ENCODE measurements at regions of chr15 and their contacts with region 1.

Region 1: DNA sequence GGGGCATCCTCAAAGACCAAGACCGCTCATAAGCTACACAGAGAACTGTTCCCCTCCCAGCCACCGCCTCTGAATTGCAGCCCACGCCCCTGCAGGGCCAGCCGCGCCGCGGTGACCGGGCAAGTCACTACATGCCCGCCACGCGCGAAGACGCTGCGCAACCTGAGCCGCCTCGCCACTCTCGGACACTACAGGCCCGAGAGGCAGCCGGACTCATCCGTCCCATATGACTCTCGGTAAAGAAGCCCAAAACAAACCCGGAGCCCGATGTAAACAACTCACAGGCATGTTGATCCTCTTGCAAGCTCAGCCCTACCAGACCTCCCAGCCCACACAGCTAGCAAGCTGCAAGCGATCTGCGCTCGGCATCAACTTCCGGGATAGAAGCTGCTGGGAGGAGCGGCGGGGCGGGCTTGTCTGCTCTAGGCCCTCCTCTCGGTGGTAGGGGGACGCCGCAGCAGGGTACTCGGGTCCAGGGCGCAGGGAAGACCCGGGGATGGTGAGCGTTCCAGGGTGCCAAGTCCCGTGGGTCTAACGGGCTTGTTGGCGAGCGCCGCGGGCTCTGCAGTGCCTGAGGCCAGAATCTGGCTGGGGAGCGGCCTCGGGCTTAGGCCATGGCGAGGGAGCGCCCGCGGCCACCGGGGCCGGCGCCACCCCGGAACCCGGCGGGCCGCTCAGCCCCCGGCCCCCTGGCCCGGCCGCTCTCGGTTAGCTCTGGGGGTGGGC is at the start of gene RPS27L:
- DNase-seq: peak; percentile 85 to 94 (median 87)
- H3K4me3 ChIP-seq: peak within 1 kb of the TSS; percentile 53 to 88
- H3K4me3 Mint-ChIP-seq: peak within 1 kb of the TSS; percentile 97 to 100 (median 100)
- H3K27ac ChIP-seq: peak within 1 kb of the TSS; percentile 74
- H3K27ac Mint-ChIP-seq: peak within 1 kb of the TSS; percentile 89 to 99 (median 98)
- H3K4me1 ChIP-seq: peaks cover 29% of the 10 kb centered on the region
- H3K4me1 Mint-ChIP-seq: peaks cover 14 to 32% (median 24%) of the 10 kb centered on the region in 4 donors
- H3K27me3 ChIP-seq: no peaks in the 10 kb centered on the region
- H3K27me3 Mint-ChIP-seq: no peaks in the 10 kb centered on the region
- total RNA-seq, gene RPS27L: 150 to 161 TPM

Region 2: GRCh38 chr15:62880278-62880677 is 277.0 kb before region 1 on chr15:
- CTCF ChIA-PET with region 1: no interaction called
- POLR2A ChIA-PET with region 1: no interaction called
- intact Hi-C with region 1: no loop called
- DNase-seq: no peak
- H3K4me3 ChIP-seq: no peak overlapping the region
- H3K4me3 Mint-ChIP-seq: no peak overlapping the region
- H3K27ac ChIP-seq: no peak overlapping the region
- H3K27ac Mint-ChIP-seq: no peak overlapping the region
- H3K4me1 ChIP-seq: no peaks in the 10 kb centered on the region
- H3K4me1 Mint-ChIP-seq: peaks cover 0 to 8% (median 2%) of the 10 kb centered on the region in 4 donors
- H3K27me3 ChIP-seq: no peaks in the 10 kb centered on the region
- H3K27me3 Mint-ChIP-seq: peaks cover 10 to 22% of the 10 kb centered on the region in 2 donors

Region 3: GRCh38 chr15:63093486-63094205 is 63.6 kb before region 1 on chr15:
- CTCF ChIA-PET with region 1: no interaction called
- POLR2A ChIA-PET with region 1: no interaction called
- intact Hi-C with region 1: no loop called
- DNase-seq: peak; percentile 57 to 62 (median 57)
- H3K4me3 ChIP-seq: no peak overlapping the region
- H3K4me3 Mint-ChIP-seq: no peak overlapping the region
- H3K27ac ChIP-seq: no peak overlapping the region
- H3K27ac Mint-ChIP-seq: no peak overlapping the region
- H3K4me1 ChIP-seq: no peaks in the 10 kb centered on the region
- H3K4me1 Mint-ChIP-seq: peaks cover 0 to 2% (median 0%) of the 10 kb centered on the region in 4 donors
- H3K27me3 ChIP-seq: no peaks in the 10 kb centered on the region
- H3K27me3 Mint-ChIP-seq: peaks cover 0 to 2% of the 10 kb centered on the region in 2 donors

Region 4: GRCh38 chr15:63121382-63122001 is 35.8 kb before region 1 on chr15 and contains the start of gene LACTB:
- CTCF ChIA-PET with region 1: no interaction called
- POLR2A ChIA-PET with region 1: interaction called, 8 read pairs
- intact Hi-C with region 1: loop called (anchors 1 kb)
- DNase-seq: peak; percentile 73 to 79 (median 77)
- H3K4me3 ChIP-seq: peak within 1 kb of the TSS; percentile 69 to 76
- H3K4me3 Mint-ChIP-seq: peak within 1 kb of the TSS; percentile 87 to 98 (median 93)
- H3K27ac ChIP-seq: peak within 1 kb of the TSS; percentile 67
- H3K27ac Mint-ChIP-seq: peak within 1 kb of the TSS; percentile 84 to 96 (median 94)
- H3K4me1 ChIP-seq: peaks cover 10% of the 10 kb centered on the region
- H3K4me1 Mint-ChIP-seq: peaks cover 7 to 28% (median 14%) of the 10 kb centered on the region in 4 donors
- H3K27me3 ChIP-seq: no peaks in the 10 kb centered on the region
- H3K27me3 Mint-ChIP-seq: no peaks in the 10 kb centered on the region
- total RNA-seq, gene LACTB: 11.7 to 12.1 TPM

Region 5: GRCh38 chr15:63146669-63147068 is 10.6 kb before region 1 on chr15:
- CTCF ChIA-PET with region 1: no interaction called
- POLR2A ChIA-PET with region 1: interaction called, 24 read pairs
- intact Hi-C with region 1: no loop called
- DNase-seq: no peak
- H3K4me3 ChIP-seq: no peak overlapping the region
- H3K4me3 Mint-ChIP-seq: no peak overlapping the region
- H3K27ac ChIP-seq: no peak overlapping the region
- H3K27ac Mint-ChIP-seq: peak overlapping the region in 1 of 7 donors; percentile 42
- H3K4me1 ChIP-seq: no peaks in the 10 kb centered on the region
- H3K4me1 Mint-ChIP-seq: peaks cover 0 to 7% (median 5%) of the 10 kb centered on the region in 4 donors
- H3K27me3 ChIP-seq: no peaks in the 10 kb centered on the region
- H3K27me3 Mint-ChIP-seq: no peaks in the 10 kb centered on the region

Region 6: DNA sequence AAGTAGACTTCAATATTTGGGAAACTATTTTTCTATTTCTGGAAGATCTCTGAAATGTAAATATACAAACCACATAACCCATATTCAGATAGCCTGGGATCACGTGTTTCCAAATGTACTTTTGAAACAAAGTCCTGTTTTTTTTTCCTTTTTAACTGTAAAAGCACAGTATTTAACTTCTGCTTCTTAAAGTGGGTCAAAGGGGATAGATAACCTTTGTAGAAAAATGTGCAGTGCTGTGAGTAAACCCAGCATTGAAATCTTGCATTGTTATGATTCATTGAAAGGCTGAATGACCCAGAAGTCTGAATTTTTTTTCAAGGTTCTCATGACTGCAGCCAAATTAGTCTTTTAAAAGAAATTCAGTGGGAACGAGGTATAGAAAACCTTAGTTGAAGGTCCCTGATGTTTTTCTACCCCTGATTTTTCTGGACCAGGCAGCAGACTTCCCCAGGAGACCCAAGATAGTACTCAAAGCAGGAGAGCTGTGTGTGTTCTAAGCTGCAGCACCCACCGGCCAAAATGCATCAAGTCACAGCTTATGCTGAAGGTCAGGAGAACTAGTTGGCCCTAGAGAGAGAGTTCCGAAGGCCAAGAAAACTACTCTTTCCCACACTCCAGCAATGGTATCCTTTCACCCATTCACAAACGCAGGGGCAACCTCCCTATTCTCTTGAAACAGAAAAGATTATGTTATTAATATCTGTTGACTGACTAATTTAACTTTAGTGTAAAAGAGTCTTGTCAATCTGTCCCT is 76.6 kb after region 1 on chr15:
- CTCF ChIA-PET with region 1: no interaction called
- POLR2A ChIA-PET with region 1: interaction called, 6 read pairs
- intact Hi-C with region 1: loop called (anchors 2 kb)
- DNase-seq: no peak
- H3K4me3 ChIP-seq: no peak overlapping the region
- H3K4me3 Mint-ChIP-seq: peak overlapping the region in 3 of 8 donors; percentile 7 to 52 (median 38)
- H3K27ac ChIP-seq: no peak overlapping the region
- H3K27ac Mint-ChIP-seq: peak overlapping the region in 6 of 7 donors; percentile 42 to 90 (median 82)
- H3K4me1 ChIP-seq: peaks cover 78% of the 10 kb centered on the region
- H3K4me1 Mint-ChIP-seq: peaks cover 53 to 79% (median 63%) of the 10 kb centered on the region in 4 donors
- H3K27me3 ChIP-seq: no peaks in the 10 kb centered on the region
- H3K27me3 Mint-ChIP-seq: no peaks in the 10 kb centered on the region

Region 7: GRCh38 chr15:63246691-63247464 is 89.6 kb after region 1 on chr15:
- CTCF ChIA-PET with region 1: no interaction called
- POLR2A ChIA-PET with region 1: interaction called, 9 read pairs
- intact Hi-C with region 1: loop called (anchors 1 kb)
- DNase-seq: no peak
- H3K4me3 ChIP-seq: no peak overlapping the region
- H3K4me3 Mint-ChIP-seq: peak overlapping the region in 1 of 8 donors; percentile 25
- H3K27ac ChIP-seq: no peak overlapping the region
- H3K27ac Mint-ChIP-seq: peak overlapping the region in 6 of 7 donors; percentile 22 to 73 (median 63)
- H3K4me1 ChIP-seq: peaks cover 26% of the 10 kb centered on the region
- H3K4me1 Mint-ChIP-seq: peaks cover 36 to 67% (median 48%) of the 10 kb centered on the region in 4 donors
- H3K27me3 ChIP-seq: no peaks in the 10 kb centered on the region
- H3K27me3 Mint-ChIP-seq: no peaks in the 10 kb centered on the region

Region 8: DNA sequence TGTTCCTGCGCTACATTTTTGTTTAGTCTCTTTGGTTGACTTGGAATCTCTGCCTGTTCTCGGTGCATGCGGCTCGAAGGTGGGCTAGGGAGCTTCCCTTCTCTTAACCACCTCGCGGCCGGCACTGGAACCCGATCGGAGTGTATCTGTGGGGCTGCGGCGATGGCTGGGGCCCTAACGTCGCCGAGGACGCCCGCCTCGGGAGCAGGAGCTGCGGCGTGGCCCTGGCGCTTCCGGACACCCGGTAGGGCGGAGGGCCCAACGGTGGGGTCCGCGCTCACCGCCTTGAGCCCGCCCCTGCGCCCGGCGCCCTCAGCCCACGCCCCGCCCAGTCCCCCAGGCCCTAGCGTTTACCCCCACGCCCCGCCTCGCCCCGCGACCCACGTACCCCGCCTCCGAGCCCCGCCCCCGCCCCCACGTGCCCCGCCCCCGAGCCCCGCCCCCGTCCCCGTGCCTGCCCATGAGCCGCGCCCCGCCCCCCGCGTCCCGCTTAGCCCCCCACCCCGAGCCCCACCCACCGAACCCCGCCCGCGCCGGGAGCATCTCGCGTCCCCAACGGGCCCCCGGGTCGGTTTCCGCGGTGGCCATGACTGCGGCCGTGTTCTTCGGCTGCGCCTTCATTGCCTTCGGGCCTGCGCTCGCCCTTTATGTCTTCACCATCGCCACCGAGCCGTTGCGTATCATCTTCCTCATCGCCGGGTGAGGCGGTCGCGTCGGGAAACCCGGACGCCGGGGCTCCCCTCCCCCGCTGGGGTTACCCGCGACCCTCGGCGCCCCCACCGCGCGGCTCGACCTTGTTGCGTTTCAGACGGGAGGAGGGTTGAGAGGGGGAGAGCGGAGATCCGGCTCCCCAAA is 120.0 kb after region 1 on chr15 and contains the start of gene APH1B:
- CTCF ChIA-PET with region 1: interaction called, 3 read pairs
- POLR2A ChIA-PET with region 1: interaction called, 40 read pairs
- intact Hi-C with region 1: loop called (anchors 1 kb)
- DNase-seq: peak; percentile 75 to 83 (median 77)
- H3K4me3 ChIP-seq: peak within 1 kb of the TSS; percentile 66 to 84
- H3K4me3 Mint-ChIP-seq: peak within 1 kb of the TSS; percentile 84 to 90 (median 88)
- H3K27ac ChIP-seq: peak within 1 kb of the TSS; percentile 68
- H3K27ac Mint-ChIP-seq: peak within 1 kb of the TSS; percentile 79 to 94 (median 92)
- H3K4me1 ChIP-seq: peaks cover 31% of the 10 kb centered on the region
- H3K4me1 Mint-ChIP-seq: peaks cover 19 to 46% (median 31%) of the 10 kb centered on the region in 4 donors
- H3K27me3 ChIP-seq: no peaks in the 10 kb centered on the region
- H3K27me3 Mint-ChIP-seq: no peaks in the 10 kb centered on the region
- total RNA-seq, gene APH1B: 23.0 to 28.4 TPM

Region 9: GRCh38 chr15:63306492-63307073 is 149.3 kb after region 1 on chr15:
- CTCF ChIA-PET with region 1: no interaction called
- POLR2A ChIA-PET with region 1: no interaction called
- intact Hi-C with region 1: no loop called
- DNase-seq: no peak
- H3K4me3 ChIP-seq: no peak overlapping the region
- H3K4me3 Mint-ChIP-seq: no peak overlapping the region
- H3K27ac ChIP-seq: no peak overlapping the region
- H3K27ac Mint-ChIP-seq: peak overlapping the region in 1 of 7 donors; percentile 62
- H3K4me1 ChIP-seq: no peaks in the 10 kb centered on the region
- H3K4me1 Mint-ChIP-seq: no peaks in the 10 kb centered on the region
- H3K27me3 ChIP-seq: no peaks in the 10 kb centered on the region
- H3K27me3 Mint-ChIP-seq: peaks cover 0 to 1% of the 10 kb centered on the region in 2 donors

Region 10: GRCh38 chr15:63402498-63403253 is 245.4 kb after region 1 on chr15:
- CTCF ChIA-PET with region 1: interaction called, 5 read pairs
- POLR2A ChIA-PET with region 1: no interaction called
- intact Hi-C with region 1: loop called (anchors 5 kb)
- DNase-seq: peak in 4 of 5 donors; percentile 34 to 44 (median 40)
- H3K4me3 ChIP-seq: no peak overlapping the region
- H3K4me3 Mint-ChIP-seq: no peak overlapping the region
- H3K27ac ChIP-seq: no peak overlapping the region
- H3K27ac Mint-ChIP-seq: no peak overlapping the region
- H3K4me1 ChIP-seq: no peaks in the 10 kb centered on the region
- H3K4me1 Mint-ChIP-seq: peaks cover 0 to 4% (median 2%) of the 10 kb centered on the region in 4 donors
- H3K27me3 ChIP-seq: no peaks in the 10 kb centered on the region
- H3K27me3 Mint-ChIP-seq: peaks cover 3 to 8% of the 10 kb centered on the region in 2 donors

Measured in CD4-positive, alpha-beta memory T cell (primary cell).